AG04450 (cell line): ENCODE measurements at regions of chr14 and their contacts with region 1.

Region 1: DNA sequence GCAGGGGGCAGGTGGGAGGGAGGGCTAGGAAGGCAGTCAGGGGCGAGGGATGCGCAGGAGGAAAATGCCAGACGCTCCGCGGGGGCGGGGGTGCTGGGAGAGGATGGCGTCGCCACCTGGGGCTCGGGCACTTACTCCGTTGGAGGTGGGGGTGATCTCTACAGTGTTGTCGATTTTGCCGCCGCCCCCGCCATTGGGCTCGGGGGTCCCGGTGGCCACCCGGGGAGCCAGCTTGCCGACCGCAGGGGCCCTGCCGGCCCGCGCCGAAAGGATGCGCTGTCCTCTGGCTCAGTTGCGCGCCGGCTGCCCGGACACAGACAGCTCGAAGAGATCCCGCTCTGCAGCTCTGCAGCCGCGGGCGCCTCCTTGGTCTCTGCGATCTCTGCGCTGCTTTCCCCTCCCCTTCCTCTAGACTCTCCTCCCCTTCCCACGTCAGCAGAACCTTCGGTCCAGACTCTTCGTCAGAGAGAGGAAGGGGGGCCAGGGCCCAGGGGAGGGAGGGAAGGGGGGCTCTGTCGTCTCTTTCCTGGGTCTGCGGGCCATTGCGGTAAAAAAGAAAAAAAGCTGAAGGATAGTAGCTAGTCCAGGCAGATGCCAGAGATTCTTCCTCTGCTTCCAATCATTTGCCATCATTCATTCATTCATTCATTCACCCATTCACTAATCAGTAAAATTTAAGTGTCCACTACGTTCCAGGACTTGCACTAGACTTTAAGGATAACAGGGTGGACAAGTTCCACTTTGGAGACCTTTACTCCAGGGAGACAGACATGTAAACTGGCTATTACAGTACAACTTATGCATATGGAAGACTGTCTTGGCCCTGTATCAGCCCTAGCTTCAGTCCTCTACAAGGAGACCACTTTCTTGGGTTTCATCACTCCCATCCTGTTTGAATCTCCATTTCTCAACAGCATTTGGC is at the start of gene SLC22A17:
- DNase-seq: peak; percentile 81
- H3K4me3 ChIP-seq: peak within 1 kb of the TSS; percentile 86
- H3K27ac ChIP-seq: peak within 1 kb of the TSS; percentile 70
- H3K27me3 ChIP-seq: no peaks in the 10 kb centered on the region
- CTCF ChIP-seq: peak; percentile 12
- polyA plus RNA-seq, gene SLC22A17: 17.4 and 27.0 TPM in 2 replicates

Region 2: DNA sequence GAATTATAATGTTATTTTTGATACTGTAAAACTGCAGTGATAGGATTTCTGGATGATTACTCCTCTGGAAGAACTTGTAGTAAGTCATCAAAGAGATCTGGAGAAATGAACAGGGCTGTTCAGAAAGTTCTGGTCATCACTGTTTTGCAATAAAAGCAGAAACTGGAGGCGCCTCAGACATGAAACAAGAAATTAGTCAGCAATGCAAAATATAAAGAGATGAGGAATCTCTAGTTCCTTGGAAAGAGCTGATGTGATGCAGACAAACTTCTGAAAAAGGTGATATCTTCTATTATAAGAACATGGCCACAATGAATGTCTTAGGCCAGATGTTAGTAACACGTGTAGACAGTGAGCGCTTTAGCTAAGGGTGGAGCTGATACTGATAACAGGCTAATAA is 267.3 kb before region 1 on chr14:
- CTCF ChIA-PET with region 1: no interaction called
- POLR2A ChIA-PET with region 1: no interaction called
- DNase-seq: no peak
- H3K4me3 ChIP-seq: no peak overlapping the region
- H3K27ac ChIP-seq: no peak overlapping the region
- H3K27me3 ChIP-seq: no peaks in the 10 kb centered on the region
- CTCF ChIP-seq: no peak

Region 3: GRCh38 chr14:23202001-23202400 is 150.8 kb before region 1 on chr14:
- CTCF ChIA-PET with region 1: no interaction called
- POLR2A ChIA-PET with region 1: no interaction called
- DNase-seq: no peak
- H3K4me3 ChIP-seq: no peak overlapping the region
- H3K27ac ChIP-seq: no peak overlapping the region
- H3K27me3 ChIP-seq: peaks cover 12% of the 10 kb centered on the region
- CTCF ChIP-seq: no peak

Region 4: GRCh38 chr14:23327947-23328744 is 24.6 kb before region 1 on chr14:
- CTCF ChIA-PET with region 1: interaction called, 11 read pairs
- POLR2A ChIA-PET with region 1: interaction called, 8 read pairs
- DNase-seq: peak; percentile 63
- H3K4me3 ChIP-seq: no peak overlapping the region
- H3K27ac ChIP-seq: no peak overlapping the region
- H3K27me3 ChIP-seq: no peaks in the 10 kb centered on the region
- CTCF ChIP-seq: peak; percentile 83

Region 5: GRCh38 chr14:23366426-23366921 is 13.7 kb after region 1 on chr14:
- CTCF ChIA-PET with region 1: no interaction called
- POLR2A ChIA-PET with region 1: interaction called, 10 read pairs
- DNase-seq: peak; percentile 24
- H3K4me3 ChIP-seq: peak overlapping the region; percentile 69
- H3K27ac ChIP-seq: peak overlapping the region; percentile 68
- H3K27me3 ChIP-seq: peaks cover 16% of the 10 kb centered on the region
- CTCF ChIP-seq: no peak